B cell (primary cell): ENCODE measurements at regions of chr20 and their contacts with region 1.

Region 1: GRCh38 chr20:62386383-62387218 is at the start of gene RPS21:
- DNase-seq: peak; percentile 95
- ATAC-seq: peak; percentile 87
- H3K4me3 ChIP-seq: peak within 1 kb of the TSS; percentile 78 to 93 (median 91)
- H3K4me3 Mint-ChIP-seq: peak within 1 kb of the TSS; percentile 94
- H3K27ac ChIP-seq: peak within 1 kb of the TSS; percentile 88 to 89
- H3K27ac Mint-ChIP-seq: peak within 1 kb of the TSS; percentile 94
- H3K4me1 ChIP-seq: peaks cover 18 to 34% of the 10 kb centered on the region in 2 donors
- H3K4me1 Mint-ChIP-seq: peaks cover 48% of the 10 kb centered on the region
- H3K27me3 ChIP-seq: no peaks in the 10 kb centered on the region
- H3K27me3 Mint-ChIP-seq: no peaks in the 10 kb centered on the region
- CTCF ChIP-seq: no peak
- total RNA-seq, gene RPS21: 2,429 and 2,653 TPM in 2 replicates

Region 2: GRCh38 chr20:62010551-62011402 is 375.8 kb before region 1 on chr20:
- CTCF ChIA-PET with region 1: interaction called, 18 read pairs
- POLR2A ChIA-PET with region 1: no interaction called
- intact Hi-C with region 1: loop called (anchors 2 kb)
- DNase-seq: peak; percentile 72
- ATAC-seq: peak; percentile 66
- H3K4me3 ChIP-seq: no peak overlapping the region
- H3K4me3 Mint-ChIP-seq: no peak overlapping the region
- H3K27ac ChIP-seq: no peak overlapping the region
- H3K27ac Mint-ChIP-seq: peak overlapping the region; percentile 62
- H3K4me1 ChIP-seq: peaks cover 0 to 3% of the 10 kb centered on the region in 2 donors
- H3K4me1 Mint-ChIP-seq: peaks cover 5% of the 10 kb centered on the region
- H3K27me3 ChIP-seq: no peaks in the 10 kb centered on the region
- H3K27me3 Mint-ChIP-seq: no peaks in the 10 kb centered on the region
- CTCF ChIP-seq: peak; percentile 84

Region 3: GRCh38 chr20:62237801-62238571 is 148.6 kb before region 1 on chr20 and contains the start of gene OSBPL2:
- CTCF ChIA-PET with region 1: interaction called, 4 read pairs
- POLR2A ChIA-PET with region 1: interaction called, 5 read pairs
- intact Hi-C with region 1: loop called (anchors 1 kb)
- DNase-seq: peak; percentile 100
- ATAC-seq: peak; percentile 98
- H3K4me3 ChIP-seq: peak within 1 kb of the TSS; percentile 46 to 74 (median 60)
- H3K4me3 Mint-ChIP-seq: peak within 1 kb of the TSS; percentile 90
- H3K27ac ChIP-seq: peak within 1 kb of the TSS; percentile 43 to 83
- H3K27ac Mint-ChIP-seq: peak within 1 kb of the TSS; percentile 96
- H3K4me1 ChIP-seq: peaks cover 17 to 22% of the 10 kb centered on the region in 2 donors
- H3K4me1 Mint-ChIP-seq: peaks cover 30% of the 10 kb centered on the region
- H3K27me3 ChIP-seq: peaks cover 0 to 17% (median 1%) of the 10 kb centered on the region in 4 experiments
- H3K27me3 Mint-ChIP-seq: peaks cover 7% of the 10 kb centered on the region
- CTCF ChIP-seq: no peak
- total RNA-seq, gene OSBPL2: 74.3 and 76.6 TPM in 2 replicates

Region 4: GRCh38 chr20:62368976-62369814 is 17.4 kb before region 1 on chr20:
- CTCF ChIA-PET with region 1: interaction called, 27 read pairs
- POLR2A ChIA-PET with region 1: interaction called, 3 read pairs
- intact Hi-C with region 1: no loop called
- DNase-seq: peak; percentile 27
- ATAC-seq: no peak
- H3K4me3 ChIP-seq: no peak overlapping the region
- H3K4me3 Mint-ChIP-seq: peak overlapping the region; percentile 80
- H3K27ac ChIP-seq: no peak overlapping the region
- H3K27ac Mint-ChIP-seq: no peak overlapping the region
- H3K4me1 ChIP-seq: peaks cover 25 to 34% of the 10 kb centered on the region in 2 donors
- H3K4me1 Mint-ChIP-seq: peaks cover 19% of the 10 kb centered on the region
- H3K27me3 ChIP-seq: peaks cover 0 to 46% (median 12%) of the 10 kb centered on the region in 4 experiments
- H3K27me3 Mint-ChIP-seq: peaks cover 6% of the 10 kb centered on the region
- CTCF ChIP-seq: peak; percentile 31

Region 5: GRCh38 chr20:62616728-62617621 is 230.4 kb after region 1 on chr20:
- CTCF ChIA-PET with region 1: interaction called, 3 read pairs
- POLR2A ChIA-PET with region 1: interaction called, 4 read pairs
- intact Hi-C with region 1: loop called (anchors 1 kb)
- DNase-seq: peak; percentile 81
- ATAC-seq: peak; percentile 71
- H3K4me3 ChIP-seq: no peak overlapping the region
- H3K4me3 Mint-ChIP-seq: peak overlapping the region; percentile 83
- H3K27ac ChIP-seq: peak overlapping the region; percentile 54 to 73
- H3K27ac Mint-ChIP-seq: peak overlapping the region; percentile 94
- H3K4me1 ChIP-seq: peaks cover 31 to 33% of the 10 kb centered on the region in 2 donors
- H3K4me1 Mint-ChIP-seq: peaks cover 41% of the 10 kb centered on the region
- H3K27me3 ChIP-seq: no peaks in the 10 kb centered on the region
- H3K27me3 Mint-ChIP-seq: no peaks in the 10 kb centered on the region
- CTCF ChIP-seq: peak; percentile 92